Activated CD4-positive, alpha-beta T cell treated with anti-CD3 and anti-CD28 coated beads for 36 hours (primary cell): ENCODE measurements at regions of chr7 and their contacts with region 1.

Region 1: GRCh38 chr7:128343554-128344430 is at the start of gene RBM28:
- DNase-seq: peak; percentile 90
- ATAC-seq: peak; percentile 96
- H3K4me3 Mint-ChIP-seq: peak within 1 kb of the TSS; percentile 84
- H3K27ac Mint-ChIP-seq: peak within 1 kb of the TSS; percentile 91
- H3K4me1 Mint-ChIP-seq: peaks cover 25% of the 10 kb centered on the region
- H3K27me3 Mint-ChIP-seq: peaks cover 9% of the 10 kb centered on the region
- total RNA-seq, gene RBM28: 55.0 to 55.2 TPM

Region 2: DNA sequence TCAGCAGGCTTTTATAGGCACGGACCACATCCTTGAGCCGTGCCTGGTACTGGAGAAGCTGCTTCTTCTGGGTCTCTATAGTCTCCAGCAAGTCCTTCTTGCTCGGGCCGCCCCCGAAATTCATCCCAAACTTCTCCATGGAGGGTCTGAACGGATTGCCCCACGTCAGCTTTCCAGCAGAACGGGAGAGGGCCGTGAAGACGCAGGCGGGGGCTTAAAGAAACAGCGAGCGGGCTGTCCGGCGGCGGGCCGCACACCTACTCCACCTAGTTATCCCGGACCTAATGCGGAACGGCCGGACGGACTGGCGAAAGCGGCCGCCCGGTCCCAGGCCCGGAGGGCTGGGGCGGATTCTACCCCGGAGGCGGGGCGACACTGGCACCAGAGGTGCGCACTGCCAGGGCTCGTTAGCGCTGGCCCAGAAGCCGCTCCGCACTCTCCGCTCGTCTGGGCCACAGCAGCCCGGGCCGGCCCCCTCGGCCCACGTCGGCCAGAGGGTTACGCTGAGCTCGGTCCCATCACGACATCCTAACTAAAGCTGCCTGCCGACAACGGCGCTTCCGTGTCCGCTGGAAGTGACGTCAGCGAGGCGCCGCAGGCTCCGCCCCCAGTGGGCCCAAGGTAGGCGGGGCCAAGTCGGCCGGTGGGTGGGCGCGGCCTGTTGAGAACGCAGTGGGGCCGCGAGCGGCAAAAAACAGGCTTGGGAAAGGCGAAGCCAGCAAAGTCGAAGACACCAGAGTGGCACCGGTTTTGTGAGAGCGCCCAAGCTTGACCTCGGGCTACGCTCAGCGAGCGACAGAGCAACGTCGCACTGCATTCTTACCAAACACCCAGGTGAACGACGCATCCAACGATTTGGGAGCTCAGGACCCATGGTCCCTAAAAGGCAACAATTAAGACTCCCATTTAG is 758.5 kb before region 1 on chr7 and contains the start of gene GCC1:
- CTCF ChIA-PET with region 1: no interaction called
- POLR2A ChIA-PET with region 1: no interaction called
- intact Hi-C with region 1: loop called in 1 of 2 experiments (anchors 1 kb)
- DNase-seq: peak; percentile 96
- ATAC-seq: peak; percentile 84
- H3K4me3 Mint-ChIP-seq: peak within 1 kb of the TSS; percentile 88
- H3K27ac Mint-ChIP-seq: peak within 1 kb of the TSS; percentile 91
- H3K4me1 Mint-ChIP-seq: peaks cover 68% of the 10 kb centered on the region
- H3K27me3 Mint-ChIP-seq: no peaks in the 10 kb centered on the region
- total RNA-seq, gene GCC1: 11.5 to 13.9 TPM

Region 3: DNA sequence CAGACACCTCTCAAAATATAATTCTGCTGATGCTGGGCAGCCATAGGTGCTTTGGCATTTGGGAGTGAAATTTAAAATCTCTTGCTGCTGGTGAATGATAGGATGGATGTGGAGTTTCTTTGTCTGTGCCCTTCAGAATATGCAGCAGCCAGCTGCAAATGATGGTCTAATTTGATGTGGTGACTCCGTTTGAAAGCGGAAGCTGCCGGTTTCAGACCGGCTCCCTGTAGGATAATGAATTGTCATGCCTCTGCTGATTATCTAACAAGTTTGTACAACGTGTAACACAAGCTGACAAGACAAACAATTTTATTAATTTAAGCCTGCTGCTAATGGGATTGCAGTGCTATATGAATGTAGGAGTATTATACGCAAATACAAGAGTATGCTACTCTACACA is 588.3 kb before region 1 on chr7:
- CTCF ChIA-PET with region 1: no interaction called
- POLR2A ChIA-PET with region 1: no interaction called
- intact Hi-C with region 1: no loop called
- DNase-seq: no peak
- ATAC-seq: no peak
- H3K4me3 Mint-ChIP-seq: no peak overlapping the region
- H3K27ac Mint-ChIP-seq: no peak overlapping the region
- H3K4me1 Mint-ChIP-seq: peaks cover 37% of the 10 kb centered on the region
- H3K27me3 Mint-ChIP-seq: no peaks in the 10 kb centered on the region

Region 4: GRCh38 chr7:128148676-128149075 is 195.1 kb before region 1 on chr7:
- CTCF ChIA-PET with region 1: no interaction called
- POLR2A ChIA-PET with region 1: no interaction called
- intact Hi-C with region 1: no loop called
- DNase-seq: no peak
- ATAC-seq: no peak
- H3K4me3 Mint-ChIP-seq: no peak overlapping the region
- H3K27ac Mint-ChIP-seq: no peak overlapping the region
- H3K4me1 Mint-ChIP-seq: no peaks in the 10 kb centered on the region
- H3K27me3 Mint-ChIP-seq: peaks cover 12% of the 10 kb centered on the region

Region 5: DNA sequence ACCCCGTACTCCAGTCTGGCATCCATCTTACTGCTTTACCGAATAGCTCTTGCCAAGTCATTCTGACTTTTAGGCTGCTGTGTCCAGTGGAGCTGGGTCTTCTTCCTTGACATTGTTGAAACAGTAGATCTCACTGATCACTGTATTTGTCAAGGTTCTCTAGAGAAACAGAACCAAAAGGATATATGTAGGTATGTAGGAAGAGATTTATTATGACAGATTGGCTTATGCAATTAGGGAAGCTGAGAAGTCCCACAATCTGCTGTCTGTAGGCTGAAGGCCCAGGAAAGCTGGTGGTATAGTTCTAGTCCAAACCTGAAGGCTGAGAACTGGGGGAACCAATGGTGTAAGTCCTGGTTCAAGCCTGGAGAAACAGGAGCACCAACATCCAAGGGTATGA is 29.8 kb after region 1 on chr7:
- CTCF ChIA-PET with region 1: interaction called, 11 read pairs
- POLR2A ChIA-PET with region 1: no interaction called
- intact Hi-C with region 1: no loop called
- DNase-seq: no peak
- ATAC-seq: no peak
- H3K4me3 Mint-ChIP-seq: no peak overlapping the region
- H3K27ac Mint-ChIP-seq: no peak overlapping the region
- H3K4me1 Mint-ChIP-seq: no peaks in the 10 kb centered on the region
- H3K27me3 Mint-ChIP-seq: peaks cover 3% of the 10 kb centered on the region

Region 6: GRCh38 chr7:128409596-128410160 is 65.9 kb after region 1 on chr7 and contains the start of gene IMPDH1:
- CTCF ChIA-PET with region 1: interaction called, 4 read pairs
- POLR2A ChIA-PET with region 1: interaction called, 6 read pairs
- intact Hi-C with region 1: loop called in 1 of 2 experiments (anchors 1 kb)
- DNase-seq: peak; percentile 92
- ATAC-seq: peak; percentile 85
- H3K4me3 Mint-ChIP-seq: peak within 1 kb of the TSS; percentile 78
- H3K27ac Mint-ChIP-seq: peak within 1 kb of the TSS; percentile 78
- H3K4me1 Mint-ChIP-seq: peaks cover 27% of the 10 kb centered on the region
- H3K27me3 Mint-ChIP-seq: no peaks in the 10 kb centered on the region
- total RNA-seq, gene IMPDH1: 59.0 to 60.7 TPM

Region 7: DNA sequence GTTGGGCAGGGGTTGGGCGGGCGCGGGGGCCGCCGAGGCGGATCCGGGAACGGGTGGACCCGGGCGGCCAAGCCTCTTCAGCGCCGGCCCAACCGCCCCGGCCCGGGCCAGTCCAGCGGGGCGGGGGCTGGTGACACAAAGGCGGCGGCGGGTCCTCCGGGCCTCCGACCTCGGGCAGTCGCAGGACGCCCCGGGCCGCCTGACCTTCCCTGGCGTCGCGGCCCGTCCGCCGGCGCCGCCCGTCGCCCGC is 187.0 kb after region 1 on chr7:
- CTCF ChIA-PET with region 1: no interaction called
- POLR2A ChIA-PET with region 1: no interaction called
- intact Hi-C with region 1: loop called in 1 of 2 experiments (anchors 1 kb)
- DNase-seq: no peak
- ATAC-seq: no peak
- H3K4me3 Mint-ChIP-seq: peak overlapping the region; percentile 95
- H3K27ac Mint-ChIP-seq: no peak overlapping the region
- H3K4me1 Mint-ChIP-seq: peaks cover 27% of the 10 kb centered on the region
- H3K27me3 Mint-ChIP-seq: no peaks in the 10 kb centered on the region

Region 8: DNA sequence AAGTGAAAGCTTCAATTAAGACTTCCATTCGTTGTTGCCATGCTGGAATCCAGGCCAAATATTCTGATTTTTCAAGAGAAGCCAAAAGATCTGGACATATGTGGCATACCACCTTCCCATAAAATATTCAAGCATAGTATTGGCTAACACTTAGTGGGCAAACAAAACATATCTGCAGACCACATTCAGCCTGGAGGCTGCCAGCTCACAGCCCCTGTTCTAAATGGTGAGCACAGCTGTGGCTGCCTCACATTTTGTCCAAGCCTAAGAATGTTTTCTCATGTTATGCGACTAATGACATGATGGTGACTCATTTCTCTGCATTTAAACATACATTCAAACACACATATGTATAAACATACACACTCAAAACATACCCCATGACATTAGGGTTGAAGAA is 384.8 kb after region 1 on chr7:
- CTCF ChIA-PET with region 1: no interaction called
- POLR2A ChIA-PET with region 1: no interaction called
- intact Hi-C with region 1: no loop called
- DNase-seq: no peak
- ATAC-seq: peak; percentile 26
- H3K4me3 Mint-ChIP-seq: no peak overlapping the region
- H3K27ac Mint-ChIP-seq: no peak overlapping the region
- H3K4me1 Mint-ChIP-seq: no peaks in the 10 kb centered on the region
- H3K27me3 Mint-ChIP-seq: peaks cover 15% of the 10 kb centered on the region

Region 9: GRCh38 chr7:129054438-129055293 is 710.9 kb after region 1 on chr7 and contains the start of gene TNPO3:
- CTCF ChIA-PET with region 1: no interaction called
- POLR2A ChIA-PET with region 1: no interaction called
- intact Hi-C with region 1: loop called in 1 of 2 experiments (anchors 1 kb)
- DNase-seq: peak; percentile 94
- ATAC-seq: peak; percentile 91
- H3K4me3 Mint-ChIP-seq: peak within 1 kb of the TSS; percentile 89
- H3K27ac Mint-ChIP-seq: peak within 1 kb of the TSS; percentile 99
- H3K4me1 Mint-ChIP-seq: peaks cover 28% of the 10 kb centered on the region
- H3K27me3 Mint-ChIP-seq: peaks cover 3% of the 10 kb centered on the region
- total RNA-seq, gene TNPO3: 57.7 to 60.5 TPM